Activated CD8-positive, alpha-beta T cell treated with anti-CD3 and anti-CD28 coated beads for 36 hours (primary cell): ENCODE measurements at regions of chr22 and their contacts with region 1.

Region 1: DNA sequence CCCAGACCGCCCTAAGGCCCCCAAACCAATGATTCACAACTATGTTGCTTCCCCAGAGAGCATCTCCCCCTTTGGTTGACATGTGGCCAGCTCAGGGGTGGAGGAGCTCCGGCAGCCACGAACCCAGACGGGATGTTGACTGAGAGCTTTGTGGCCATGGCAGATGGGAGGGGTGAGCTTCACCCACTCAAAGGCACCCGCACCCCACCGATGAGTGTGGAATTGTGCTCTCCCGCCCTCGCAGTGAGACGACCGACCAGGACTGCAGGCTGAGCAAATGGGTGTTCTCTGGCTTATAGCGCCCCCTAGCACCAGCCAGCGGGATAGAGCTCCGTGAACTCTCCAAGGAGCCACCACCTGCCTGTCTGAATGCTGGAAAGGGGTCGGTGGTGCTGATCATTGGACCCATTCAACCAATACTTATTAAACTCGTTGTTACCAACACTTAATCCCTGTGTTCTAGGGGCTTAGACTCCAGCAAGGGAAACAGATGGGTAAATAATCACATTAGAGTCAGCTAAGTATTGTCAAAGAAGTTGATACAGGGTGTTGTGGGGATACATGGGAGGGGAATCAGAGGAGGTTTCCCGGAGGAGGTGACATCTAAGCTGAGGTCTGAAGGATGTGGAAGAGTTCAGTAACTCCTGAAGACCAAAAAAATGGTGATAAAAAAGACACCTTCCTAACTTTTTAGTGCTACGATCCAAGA is 4.5 kb upstream of the TIMP3 start:
- DNase-seq: peak; percentile 76
- ATAC-seq: peak; percentile 94
- H3K4me3 Mint-ChIP-seq: no peak overlapping the region
- H3K27ac Mint-ChIP-seq: no peak overlapping the region
- H3K4me1 Mint-ChIP-seq: no peaks in the 10 kb centered on the region
- H3K27me3 Mint-ChIP-seq: peaks cover 25% of the 10 kb centered on the region
- CTCF ChIP-seq: peak; percentile 76

Region 2: GRCh38 chr22:32628628-32629572 is 168.1 kb before region 1 on chr22:
- CTCF ChIA-PET with region 1: interaction called, 11 read pairs
- POLR2A ChIA-PET with region 1: no interaction called
- intact Hi-C with region 1: no loop called
- DNase-seq: no peak
- ATAC-seq: no peak
- H3K4me3 Mint-ChIP-seq: no peak overlapping the region
- H3K27ac Mint-ChIP-seq: no peak overlapping the region
- H3K4me1 Mint-ChIP-seq: peaks cover 13% of the 10 kb centered on the region
- H3K27me3 Mint-ChIP-seq: peaks cover 9% of the 10 kb centered on the region
- CTCF ChIP-seq: no peak

Region 3: GRCh38 chr22:32668254-32669094 is 128.5 kb before region 1 on chr22:
- CTCF ChIA-PET with region 1: interaction called, 13 read pairs
- POLR2A ChIA-PET with region 1: no interaction called
- intact Hi-C with region 1: no loop called
- DNase-seq: no peak
- ATAC-seq: no peak
- H3K4me3 Mint-ChIP-seq: no peak overlapping the region
- H3K27ac Mint-ChIP-seq: no peak overlapping the region
- H3K4me1 Mint-ChIP-seq: no peaks in the 10 kb centered on the region
- H3K27me3 Mint-ChIP-seq: peaks cover 4% of the 10 kb centered on the region
- CTCF ChIP-seq: no peak

Region 4: GRCh38 chr22:32785321-32786034 is 11.5 kb before region 1 on chr22:
- CTCF ChIA-PET with region 1: interaction called, 22 read pairs
- POLR2A ChIA-PET with region 1: no interaction called
- intact Hi-C with region 1: no loop called
- DNase-seq: no peak
- ATAC-seq: no peak
- H3K4me3 Mint-ChIP-seq: no peak overlapping the region
- H3K27ac Mint-ChIP-seq: no peak overlapping the region
- H3K4me1 Mint-ChIP-seq: no peaks in the 10 kb centered on the region
- H3K27me3 Mint-ChIP-seq: peaks cover 4% of the 10 kb centered on the region
- CTCF ChIP-seq: no peak